PC-9 (cell line): ENCODE measurements at regions of chr14 and their contacts with region 1.

Region 1: GRCh38 chr14:53929871-53930715 is 26.5 kb downstream of the BMP4 start:
- DNase-seq: peak; percentile 35 to 38
- H3K4me3 ChIP-seq: no peak overlapping the region
- H3K27ac ChIP-seq: no peak overlapping the region
- H3K4me1 ChIP-seq: peaks cover 8% of the 10 kb centered on the region
- H3K27me3 ChIP-seq: no peaks in the 10 kb centered on the region
- CTCF ChIP-seq: peak; percentile 70

Region 2: DNA sequence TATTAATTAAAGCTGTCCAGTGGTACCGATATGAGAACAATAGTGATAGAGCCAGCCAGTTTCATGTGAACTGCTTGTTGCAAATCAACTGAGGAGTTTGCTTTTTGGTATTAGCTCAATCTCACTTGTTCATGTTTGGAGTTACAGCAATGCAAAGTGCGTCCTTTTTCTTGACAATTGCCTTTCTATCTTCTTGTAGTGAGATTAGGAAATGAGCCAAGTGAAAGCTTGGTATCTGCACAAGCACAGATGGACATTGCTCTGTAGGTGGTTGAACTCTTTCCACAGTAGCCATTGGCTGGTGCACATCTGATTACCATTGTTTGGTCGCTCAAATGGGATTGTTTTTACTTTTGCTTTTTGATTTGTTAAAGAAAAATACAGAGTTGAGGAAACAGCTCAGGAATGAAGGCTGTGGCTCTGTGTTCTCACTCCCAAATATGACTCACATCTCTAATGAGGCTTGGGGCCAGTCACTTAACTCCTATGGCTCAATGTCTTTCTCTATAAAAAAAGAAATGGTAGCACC is 214.8 kb before region 1 on chr14:
- CTCF ChIA-PET with region 1: no interaction called
- POLR2A ChIA-PET with region 1: no interaction called
- intact Hi-C with region 1: loop called (anchors 10 kb)
- DNase-seq: peak; percentile 27 to 68
- H3K4me3 ChIP-seq: peak overlapping the region; percentile 3; the same call in 1 of the 2 replicates
- H3K27ac ChIP-seq: no peak overlapping the region
- H3K4me1 ChIP-seq: peaks cover 9% of the 10 kb centered on the region
- H3K27me3 ChIP-seq: no peaks in the 10 kb centered on the region
- CTCF ChIP-seq: no peak

Region 3: GRCh38 chr14:53748691-53749090 is 181.4 kb before region 1 on chr14:
- CTCF ChIA-PET with region 1: no interaction called
- POLR2A ChIA-PET with region 1: no interaction called
- intact Hi-C with region 1: no loop called
- DNase-seq: no peak
- H3K4me3 ChIP-seq: no peak overlapping the region
- H3K27ac ChIP-seq: no peak overlapping the region
- H3K4me1 ChIP-seq: no peaks in the 10 kb centered on the region
- H3K27me3 ChIP-seq: no peaks in the 10 kb centered on the region
- CTCF ChIP-seq: no peak

Region 4: DNA sequence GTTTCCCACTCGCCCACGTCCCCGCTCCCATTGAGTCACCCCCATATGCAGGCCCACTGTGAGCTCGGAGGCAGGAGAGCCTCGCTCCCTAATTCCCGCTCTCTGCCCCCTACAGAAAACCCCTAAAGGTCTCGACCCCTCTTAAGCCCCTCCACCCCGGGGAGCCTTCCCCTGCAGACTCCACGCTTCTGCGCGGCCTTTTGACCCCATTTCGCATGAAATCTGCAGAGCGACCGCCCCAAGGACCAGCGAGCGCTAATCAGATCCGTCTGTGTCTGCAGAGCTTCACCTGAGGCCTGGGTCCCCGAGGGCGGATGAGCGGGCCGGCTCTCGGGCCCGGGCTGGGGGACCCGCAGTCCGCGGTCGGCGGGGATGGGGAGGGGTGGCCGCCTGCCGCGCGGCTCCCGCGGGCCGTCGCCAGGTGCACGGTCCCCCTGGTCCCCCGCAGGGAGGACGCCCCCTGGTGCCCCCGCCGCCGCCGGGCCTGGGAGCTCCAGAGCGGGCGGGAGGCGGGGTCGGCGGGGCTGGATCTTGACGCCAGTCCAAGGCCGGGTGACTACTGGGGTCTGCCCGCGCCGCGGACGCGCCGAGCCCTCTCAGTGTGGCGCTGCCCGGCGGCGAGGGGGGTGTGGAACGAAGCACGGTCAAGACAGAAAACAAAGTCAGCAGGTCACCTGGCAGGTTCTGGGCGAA is 16.5 kb after region 1 on chr14:
- CTCF ChIA-PET with region 1: no interaction called
- POLR2A ChIA-PET with region 1: interaction called, 15 read pairs
- intact Hi-C with region 1: no loop called
- DNase-seq: no peak
- H3K4me3 ChIP-seq: no peak overlapping the region
- H3K27ac ChIP-seq: no peak overlapping the region
- H3K4me1 ChIP-seq: no peaks in the 10 kb centered on the region
- H3K27me3 ChIP-seq: no peaks in the 10 kb centered on the region
- CTCF ChIP-seq: no peak